ENCODE measurements at regions of chr2 and their contacts with region 1.

Region 1: DNA sequence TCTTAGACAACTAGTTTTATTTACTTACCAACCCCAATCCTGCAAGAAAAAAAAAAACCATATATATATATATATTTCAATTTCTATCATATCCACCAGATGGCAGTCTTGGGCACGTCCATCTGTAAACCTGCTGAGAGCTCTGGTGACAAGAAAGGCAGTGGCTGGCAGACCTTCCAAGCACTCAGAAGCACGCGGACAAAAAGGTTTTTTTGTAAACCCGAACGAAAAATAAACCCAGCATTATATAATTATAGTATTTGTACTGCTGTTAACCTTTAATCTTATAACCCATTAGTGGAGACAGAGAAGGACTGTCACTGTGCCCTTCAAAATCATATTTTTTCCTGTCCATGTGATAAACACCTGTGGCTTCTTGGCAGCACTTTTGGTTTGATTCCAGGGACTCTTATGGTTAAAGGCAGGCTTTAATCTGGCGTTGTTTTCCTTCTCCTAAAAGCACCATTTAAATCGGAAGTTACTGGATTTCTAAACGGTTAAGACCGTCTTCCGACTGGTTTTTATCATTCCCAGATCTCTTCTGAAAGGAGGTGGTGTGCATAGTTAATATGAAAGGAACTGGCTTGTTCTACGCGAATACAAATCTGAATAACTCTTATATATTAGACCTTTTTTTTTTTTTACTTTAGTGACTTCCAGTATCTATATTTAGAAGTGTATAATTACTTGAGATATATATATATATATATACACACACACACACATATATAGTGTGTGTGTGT is 31.0 kb upstream of the SLC3A1 start:
- DNase-seq: peak; percentile 46 to 74 (median 53)
- ATAC-seq: peak; percentile 86
- H3K4me3 ChIP-seq: no peak overlapping the region
- H3K27ac ChIP-seq: no peak overlapping the region
- H3K4me1 ChIP-seq: no peaks in the 10 kb centered on the region; a peak in 1 of 5 replicates
- H3K27me3 ChIP-seq: peaks cover 3% of the 10 kb centered on the region in 2 experiments; a peak in 2 of 5 replicates
- CTCF ChIP-seq: peak; percentile 48 to 68 (median 60); a peak in 5 of 6 replicates
- EP300 ChIP-seq: no peak
- POLR2A ChIP-seq: no peak
- RAD21 ChIP-seq: peak; percentile 40 to 50

Region 2: DNA sequence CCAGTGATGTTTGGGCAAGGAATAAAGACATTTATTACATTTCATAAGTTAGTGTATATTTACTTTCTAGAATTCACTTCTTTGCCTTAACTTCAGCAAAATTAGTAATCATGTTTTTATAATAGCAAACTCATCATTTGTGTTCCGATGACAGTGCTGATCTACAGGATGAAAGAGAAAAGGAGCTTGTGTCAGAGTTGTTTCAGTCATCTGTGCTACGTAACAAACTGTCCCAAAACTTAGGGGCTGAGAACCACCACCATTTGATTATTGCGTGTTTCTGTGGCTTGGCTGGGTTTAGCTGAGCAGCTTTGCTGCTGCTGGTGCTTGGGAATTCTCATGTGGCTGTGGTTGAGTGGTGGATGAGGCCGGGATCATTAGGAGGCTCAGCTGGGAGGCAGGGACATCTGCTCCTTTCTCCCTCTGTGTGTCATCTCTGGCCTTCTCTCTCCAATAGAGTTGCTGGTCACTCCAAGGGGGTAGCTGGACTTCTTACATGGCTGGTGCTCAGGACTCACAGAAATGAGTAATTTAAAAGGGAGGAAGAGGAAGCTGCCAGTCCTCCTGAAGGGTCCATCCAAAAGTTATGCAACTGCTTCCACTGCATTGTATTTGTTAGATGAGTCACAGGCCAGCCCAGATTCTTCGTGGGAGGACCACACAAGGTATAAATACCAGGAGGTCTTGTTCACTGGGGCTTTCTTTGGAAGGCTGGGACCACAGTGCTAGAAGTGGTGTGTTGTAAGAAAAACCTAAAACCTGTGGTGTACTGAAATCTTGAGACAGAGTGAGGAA is 1408.5 kb before region 1 on chr2:
- CTCF ChIA-PET with region 1: no interaction called
- POLR2A ChIA-PET with region 1: no interaction called
- in situ Hi-C with region 1: no loop called
- intact Hi-C with region 1: no loop called
- DNase-seq: no peak
- ATAC-seq: no peak
- H3K4me3 ChIP-seq: no peak overlapping the region
- H3K27ac ChIP-seq: no peak overlapping the region
- H3K4me1 ChIP-seq: 0 out of 5 replicates have a peak, but pooled peaks cover 0 to 3% of the 10 kb centered on the region in 2 experiments
- H3K27me3 ChIP-seq: no peaks in the 10 kb centered on the region
- CTCF ChIP-seq: no peak
- EP300 ChIP-seq: no peak
- POLR2A ChIP-seq: no peak
- RAD21 ChIP-seq: no peak

Region 3: DNA sequence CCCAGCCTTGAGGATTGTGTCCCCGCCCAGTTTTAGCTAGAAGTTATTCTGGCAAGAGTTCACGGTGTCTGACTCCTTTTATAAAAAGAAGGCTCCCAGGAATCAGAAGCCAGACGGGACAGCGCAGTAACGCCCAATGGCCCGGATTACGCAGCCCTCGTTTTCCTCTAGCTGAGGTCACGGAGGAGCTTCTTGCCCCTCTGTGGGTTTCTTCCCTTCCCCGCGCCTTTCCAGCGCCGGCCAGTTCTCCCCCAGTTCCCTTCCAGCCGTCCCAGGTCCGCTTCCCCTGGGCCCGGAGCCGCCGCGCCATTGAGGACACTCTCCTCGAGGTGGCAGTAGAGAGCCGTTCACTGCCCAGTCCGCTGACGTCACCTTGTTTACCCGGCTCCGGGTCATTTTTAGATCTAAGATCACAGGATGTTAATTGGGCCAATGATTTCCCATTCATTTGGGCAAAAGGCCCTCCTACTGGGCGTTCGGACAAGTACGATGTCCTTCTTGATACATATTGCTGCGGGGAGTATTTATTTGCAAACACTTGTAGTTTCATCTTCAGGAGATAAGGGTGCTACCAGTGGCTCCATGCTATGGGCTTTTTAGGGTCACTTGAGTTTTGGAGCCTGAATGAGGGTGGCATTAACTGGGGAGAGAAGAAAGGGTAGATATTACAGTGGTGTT is 157.1 kb before region 1 on chr2:
- CTCF ChIA-PET with region 1: no interaction called
- POLR2A ChIA-PET with region 1: no interaction called
- in situ Hi-C with region 1: no loop called
- intact Hi-C with region 1: loop called (anchors 5 kb)
- DNase-seq: peak; percentile 83 to 91 (median 88)
- ATAC-seq: peak; percentile 96
- H3K4me3 ChIP-seq: peak overlapping the region; percentile 28
- H3K27ac ChIP-seq: no peak overlapping the region
- H3K4me1 ChIP-seq: peaks cover 3 to 5% of the 10 kb centered on the region in 2 experiments; a peak in 2 of 5 replicates
- H3K27me3 ChIP-seq: peaks cover 10 to 17% of the 10 kb centered on the region in 2 experiments; a peak in 4 of 5 replicates
- CTCF ChIP-seq: peak; percentile 92 to 95 (median 95)
- EP300 ChIP-seq: no peak
- POLR2A ChIP-seq: no peak
- RAD21 ChIP-seq: peak; percentile 90 to 91

Region 4: DNA sequence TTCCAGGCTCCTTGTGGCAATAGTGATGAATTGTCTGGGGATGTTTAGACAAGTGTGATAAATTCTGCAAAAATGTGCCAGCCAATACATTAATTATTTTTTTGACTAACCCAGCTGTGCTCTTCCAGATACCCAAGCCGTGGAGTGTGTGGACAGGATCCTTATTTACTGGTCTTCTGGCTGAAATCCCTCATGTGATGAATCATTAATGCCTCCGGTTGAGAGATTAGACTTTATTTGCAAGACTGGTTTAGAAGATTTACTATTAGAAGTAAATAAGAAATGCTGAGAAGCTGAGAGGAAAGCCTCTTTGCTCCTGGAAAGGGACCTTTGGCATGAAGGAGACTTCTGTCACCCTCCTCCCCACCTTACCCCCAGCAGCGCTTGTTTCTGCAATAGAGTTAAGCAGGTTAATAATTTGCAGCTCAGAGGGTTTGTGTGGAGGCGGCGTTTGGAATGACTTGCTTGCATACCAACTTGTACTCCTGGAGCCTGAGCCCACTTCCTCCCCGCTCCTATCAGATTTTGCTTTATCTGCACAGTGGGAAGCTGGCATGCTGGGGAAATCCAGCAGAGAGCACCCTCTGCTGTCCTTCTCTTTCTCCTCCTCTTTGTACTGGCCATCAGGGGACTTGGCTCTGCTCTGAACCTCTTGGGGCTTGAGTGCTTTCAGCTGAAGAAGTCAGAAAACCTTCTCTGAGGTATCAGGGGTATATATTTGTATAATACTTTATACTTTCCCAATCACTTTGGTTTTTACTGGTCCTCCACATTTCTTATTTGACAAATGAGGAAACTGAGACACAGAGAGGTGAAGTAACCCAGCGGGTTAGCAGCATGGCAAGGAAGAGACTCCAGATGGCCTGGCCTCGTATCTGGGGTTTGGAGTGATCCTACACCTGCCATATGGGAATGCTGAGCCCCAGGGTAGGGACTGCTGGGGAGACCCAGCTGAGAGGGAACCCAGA is 47.3 kb after region 1 on chr2:
- CTCF ChIA-PET with region 1: interaction called, 4 read pairs
- POLR2A ChIA-PET with region 1: no interaction called
- in situ Hi-C with region 1: no loop called
- intact Hi-C with region 1: loop called (anchors 5 kb)
- DNase-seq: peak in 3 of 4 experiments; percentile 14 to 45 (median 28)
- ATAC-seq: peak; percentile 89
- H3K4me3 ChIP-seq: no peak overlapping the region
- H3K27ac ChIP-seq: no peak overlapping the region
- H3K4me1 ChIP-seq: peaks cover 0 to 2% of the 10 kb centered on the region in 2 experiments; a peak in 1 of 5 replicates
- H3K27me3 ChIP-seq: peaks cover 13 to 37% of the 10 kb centered on the region in 2 experiments
- CTCF ChIP-seq: peak; percentile 49 to 76 (median 66); a peak in 5 of 6 replicates
- EP300 ChIP-seq: no peak
- POLR2A ChIP-seq: no peak
- RAD21 ChIP-seq: peak; percentile 86 to 87

Region 5: DNA sequence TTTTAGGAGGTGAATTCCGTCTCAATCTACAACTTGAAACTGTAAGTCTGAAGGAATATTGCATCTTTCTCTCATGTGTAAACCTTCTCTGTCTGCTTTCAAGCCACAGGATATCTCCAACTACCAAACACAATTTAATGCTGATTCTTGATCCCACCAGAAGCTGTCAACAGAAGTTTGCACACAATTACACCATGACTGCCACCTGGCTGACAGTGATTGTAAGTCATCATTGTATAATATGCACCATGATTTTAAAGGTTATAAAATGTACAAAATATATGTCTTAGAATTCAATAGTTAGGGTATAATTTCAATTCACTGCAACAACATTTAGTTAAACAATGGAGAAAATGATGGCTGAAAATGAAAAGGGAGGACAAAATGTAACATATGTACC is 98.6 kb after region 1 on chr2:
- CTCF ChIA-PET with region 1: no interaction called
- POLR2A ChIA-PET with region 1: no interaction called
- in situ Hi-C with region 1: no loop called
- intact Hi-C with region 1: loop called (anchors 1 kb)
- DNase-seq: peak in 1 of 4 experiments; percentile 35
- ATAC-seq: peak; percentile 75; the same call in 2 of the 3 replicates
- H3K4me3 ChIP-seq: no peak overlapping the region
- H3K27ac ChIP-seq: no peak overlapping the region
- H3K4me1 ChIP-seq: no peaks in the 10 kb centered on the region
- H3K27me3 ChIP-seq: no peaks in the 10 kb centered on the region
- CTCF ChIP-seq: peak; percentile 38 to 55 (median 45); a peak in 3 of 6 replicates
- EP300 ChIP-seq: no peak
- POLR2A ChIP-seq: no peak
- RAD21 ChIP-seq: peak; percentile 22 to 53; a peak in 2 of 4 replicates

Region 6: DNA sequence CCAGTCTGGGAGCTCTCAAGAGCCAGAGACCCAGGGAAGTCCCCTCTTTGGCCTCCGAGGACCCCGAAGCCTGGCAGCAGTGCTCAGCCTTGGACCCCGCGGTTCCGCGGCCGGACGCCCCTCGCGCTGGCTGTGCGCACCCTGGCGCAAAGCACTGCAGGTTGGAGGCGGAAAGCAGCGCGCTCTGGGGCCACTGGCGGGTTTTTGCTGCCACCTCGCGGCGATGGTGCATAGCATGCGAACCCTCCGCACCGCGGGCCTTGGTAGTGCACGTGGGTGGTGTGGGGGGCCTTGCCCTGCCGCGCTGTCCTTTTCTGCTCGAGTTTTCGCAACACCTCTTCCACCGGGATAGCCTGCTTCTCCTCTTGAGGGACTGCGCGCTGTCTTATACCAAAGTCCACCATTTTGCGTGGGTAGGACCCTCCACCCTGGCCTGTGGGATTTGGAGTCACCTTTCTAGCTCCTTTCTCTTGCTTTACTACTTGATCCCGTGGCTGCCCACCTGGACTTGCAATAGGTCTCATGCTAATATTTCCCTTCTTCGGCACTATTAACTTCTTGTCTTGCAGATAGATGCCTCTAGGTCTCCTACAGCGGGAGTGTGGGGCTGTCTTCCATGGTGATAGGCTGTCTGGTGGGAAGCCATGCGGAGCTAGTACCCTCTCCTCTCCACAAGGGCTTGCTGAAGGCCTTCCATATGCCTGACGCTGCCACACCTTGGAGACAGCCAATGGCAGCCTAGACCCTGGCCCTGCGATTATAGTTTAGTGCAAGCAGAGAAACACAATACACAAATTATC is 711.5 kb after region 1 on chr2:
- CTCF ChIA-PET with region 1: no interaction called
- POLR2A ChIA-PET with region 1: no interaction called
- in situ Hi-C with region 1: no loop called
- intact Hi-C with region 1: loop called (anchors 5 kb)
- DNase-seq: peak; percentile 75 to 78 (median 78)
- ATAC-seq: peak; percentile 93
- H3K4me3 ChIP-seq: no peak overlapping the region
- H3K27ac ChIP-seq: no peak overlapping the region
- H3K4me1 ChIP-seq: peaks cover 0 to 26% of the 10 kb centered on the region in 2 experiments; a peak in 3 of 5 replicates
- H3K27me3 ChIP-seq: peaks cover 19 to 66% of the 10 kb centered on the region in 2 experiments; a peak in 4 of 5 replicates
- CTCF ChIP-seq: peak; percentile 79 to 97 (median 87)
- EP300 ChIP-seq: no peak
- POLR2A ChIP-seq: no peak
- RAD21 ChIP-seq: peak; percentile 83 to 92

Measured in K562 (cell line).